HAP-1 (cell line): ENCODE measurements at regions of chrX and their contacts with region 1.

Region 1: GRCh38 chrX:109714340-109714958 is 18.6 kb downstream of the ACSL4 start:
- DNase-seq: no peak
- H3K4me3 ChIP-seq: no peak overlapping the region
- H3K4me1 ChIP-seq: no peaks in the 10 kb centered on the region
- H3K27me3 ChIP-seq: no peaks in the 10 kb centered on the region

Region 2: GRCh38 chrX:108795240-108795639 is 919.2 kb before region 1 on chrX:
- in situ Hi-C with region 1: no loop called
- DNase-seq: no peak
- H3K4me3 ChIP-seq: no peak overlapping the region
- H3K4me1 ChIP-seq: no peaks in the 10 kb centered on the region
- H3K27me3 ChIP-seq: no peaks in the 10 kb centered on the region

Region 3: DNA sequence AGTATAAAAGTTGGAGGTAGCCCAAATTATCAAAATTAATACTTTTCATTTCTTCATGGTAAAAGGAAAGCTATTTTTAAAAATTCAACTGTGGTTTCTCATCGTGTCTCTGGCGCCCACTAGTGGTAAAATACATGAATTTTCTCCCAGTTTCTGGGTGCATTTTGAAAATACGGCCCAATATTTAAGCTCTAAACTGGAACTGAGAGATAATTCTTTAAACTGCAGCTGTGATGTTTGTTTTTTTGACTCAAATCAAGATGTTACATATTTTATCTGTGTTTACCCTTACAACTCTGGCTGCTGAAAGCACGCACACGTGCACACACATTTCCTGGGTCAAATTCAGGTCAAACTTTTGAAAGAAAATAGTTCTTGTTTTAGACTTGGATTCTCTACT is 142.5 kb after region 1 on chrX:
- in situ Hi-C with region 1: loop called (anchors 10 kb)
- DNase-seq: peak in 1 of 2 experiments; percentile 30
- H3K4me3 ChIP-seq: no peak overlapping the region
- H3K4me1 ChIP-seq: peaks cover 4% of the 10 kb centered on the region
- H3K27me3 ChIP-seq: peaks cover 40% of the 10 kb centered on the region